IMR-90 (cell line): ENCODE measurements at regions of chr13 and their contacts with region 1.

Region 1: GRCh38 chr13:62908321-62908720 is 1492.7 kb upstream of the PCDH20 start:
- DNase-seq: no peak
- ATAC-seq: no peak
- H3K4me3 ChIP-seq: no peak overlapping the region
- H3K27ac ChIP-seq: no peak overlapping the region
- H3K4me1 ChIP-seq: no peaks in the 10 kb centered on the region
- H3K27me3 ChIP-seq: no peaks in the 10 kb centered on the region
- CTCF ChIP-seq: no peak
- POLR2A ChIP-seq: no peak
- RAD21 ChIP-seq: no peak

Region 2: DNA sequence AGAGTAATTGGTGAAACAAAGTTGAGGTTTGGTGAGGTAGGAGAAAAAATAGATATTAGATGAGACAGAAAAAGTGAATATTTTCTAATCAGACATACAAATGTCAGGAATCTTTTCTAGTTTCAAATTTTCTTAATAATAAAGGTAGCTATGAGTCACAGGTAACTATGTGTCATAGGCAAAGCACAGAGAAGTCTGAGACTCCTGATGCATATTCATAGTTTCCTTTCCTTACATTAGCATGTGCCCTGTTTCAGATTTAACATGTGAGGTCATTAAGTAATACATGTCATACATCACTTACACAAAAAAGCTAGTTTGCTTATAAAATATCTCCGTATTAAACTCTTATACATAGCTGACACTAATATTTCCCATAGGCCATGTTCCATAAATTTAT is 351.3 kb before region 1 on chr13:
- CTCF ChIA-PET with region 1: no interaction called
- POLR2A ChIA-PET with region 1: no interaction called
- dilution Hi-C with region 1: no loop called
- in situ Hi-C with region 1: no loop called
- intact Hi-C with region 1: loop called (anchors 5 kb)
- DNase-seq: peak; percentile 8
- ATAC-seq: no peak
- H3K4me3 ChIP-seq: no peak overlapping the region
- H3K27ac ChIP-seq: no peak overlapping the region
- H3K4me1 ChIP-seq: no peaks in the 10 kb centered on the region
- H3K27me3 ChIP-seq: no peaks in the 10 kb centered on the region
- CTCF ChIP-seq: no peak
- POLR2A ChIP-seq: no peak
- RAD21 ChIP-seq: no peak

Region 3: DNA sequence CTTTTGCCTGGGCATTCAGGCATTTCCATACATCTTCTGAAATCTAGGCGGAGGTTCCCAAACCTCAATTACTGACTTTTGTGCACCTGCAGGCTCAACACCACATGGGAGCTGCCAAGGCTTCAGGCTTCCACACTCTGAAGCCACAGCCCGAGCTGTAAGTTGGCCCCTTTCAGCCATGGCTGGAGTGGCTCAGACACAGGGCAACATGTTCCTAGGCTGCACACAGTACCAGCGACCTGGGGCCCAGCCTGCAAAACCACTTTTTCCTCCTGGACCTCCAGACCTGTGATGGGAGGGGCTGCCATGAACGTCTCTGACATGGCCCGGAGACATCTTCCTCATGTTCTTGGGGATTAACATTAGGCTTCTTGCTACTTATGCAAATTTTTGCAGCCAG is 65.5 kb after region 1 on chr13:
- CTCF ChIA-PET with region 1: no interaction called
- POLR2A ChIA-PET with region 1: no interaction called
- dilution Hi-C with region 1: no loop called
- in situ Hi-C with region 1: no loop called
- intact Hi-C with region 1: no loop called
- DNase-seq: no peak
- ATAC-seq: no peak
- H3K4me3 ChIP-seq: no peak overlapping the region
- H3K27ac ChIP-seq: no peak overlapping the region
- H3K4me1 ChIP-seq: no peaks in the 10 kb centered on the region
- H3K27me3 ChIP-seq: no peaks in the 10 kb centered on the region
- CTCF ChIP-seq: no peak
- POLR2A ChIP-seq: no peak
- RAD21 ChIP-seq: no peak